Naive thymus-derived CD4-positive, alpha-beta T cell (primary cell): ENCODE measurements at regions of chr10 and their contacts with region 1.

Region 1: DNA sequence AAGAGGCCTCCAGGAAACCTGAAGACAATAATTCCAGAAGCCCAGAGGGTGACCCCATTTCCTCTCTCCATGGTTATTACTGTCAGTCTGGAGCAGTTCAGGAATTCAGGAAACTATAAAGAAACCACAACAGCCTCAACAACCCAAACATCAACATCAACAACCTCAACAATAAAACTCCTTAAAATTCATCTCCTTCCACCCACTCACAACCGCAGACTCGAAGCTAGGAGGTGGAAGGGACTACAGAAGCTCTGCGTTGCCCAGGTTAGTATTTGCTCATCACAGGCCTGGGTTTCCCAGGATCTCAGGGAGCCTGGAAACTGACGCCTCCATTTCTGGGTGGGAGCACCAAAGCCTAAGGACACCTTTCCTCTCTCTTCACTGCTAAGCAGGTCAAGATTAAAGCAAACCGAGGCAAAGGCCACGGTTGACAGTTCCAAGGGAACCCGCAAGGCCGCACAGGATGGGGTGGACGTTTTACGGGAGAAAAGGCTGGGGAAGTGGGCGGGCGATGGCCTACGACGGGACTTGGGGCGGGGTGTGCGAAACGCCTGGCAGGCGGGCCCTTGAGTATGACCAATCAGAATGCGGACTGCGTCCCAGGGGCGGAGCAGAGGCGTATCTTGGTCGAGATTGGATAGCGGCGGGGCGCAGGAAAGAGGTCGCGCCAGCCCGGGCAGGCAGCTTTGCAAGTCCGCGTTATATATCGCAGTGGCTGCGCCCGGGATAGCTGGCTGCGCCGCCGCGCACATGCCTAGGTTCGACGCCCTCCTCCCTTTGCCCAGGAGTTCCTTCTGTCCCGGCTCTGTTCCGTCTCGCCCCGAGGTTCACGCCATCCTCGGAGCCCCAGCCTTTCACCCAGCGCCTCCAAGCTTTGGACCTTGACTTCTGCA is at the start of gene ELOVL3:
- DNase-seq: peak; percentile 56 to 83 (median 79)
- ATAC-seq: peak; percentile 95
- H3K4me3 ChIP-seq: peak within 1 kb of the TSS; percentile 26
- H3K4me3 Mint-ChIP-seq: peak within 1 kb of the TSS; percentile 72 to 95 (median 80)
- H3K27ac ChIP-seq: no peak within 1 kb of the TSS
- H3K27ac Mint-ChIP-seq: peak within 1 kb of the TSS in 5 of 9 donors; percentile 14 to 78 (median 74)
- H3K4me1 ChIP-seq: peaks cover 20 to 22% of the 10 kb centered on the region in 2 donors
- H3K4me1 Mint-ChIP-seq: peaks cover 14 to 23% (median 21%) of the 10 kb centered on the region in 7 donors
- H3K27me3 ChIP-seq: peaks cover 3 to 5% of the 10 kb centered on the region in 2 donors
- H3K27me3 Mint-ChIP-seq: peaks cover 36 to 74% (median 39%) of the 10 kb centered on the region in 5 donors
- total RNA-seq, gene ELOVL3: not detected

Region 2: GRCh38 chr10:101258179-101258885 is 967.6 kb before region 1 on chr10:
- CTCF ChIA-PET with region 1: no interaction called
- POLR2A ChIA-PET with region 1: no interaction called
- intact Hi-C with region 1: no loop called
- DNase-seq: no peak
- ATAC-seq: no peak
- H3K4me3 ChIP-seq: no peak overlapping the region
- H3K4me3 Mint-ChIP-seq: no peak overlapping the region
- H3K27ac ChIP-seq: no peak overlapping the region
- H3K27ac Mint-ChIP-seq: no peak overlapping the region
- H3K4me1 ChIP-seq: no peaks in the 10 kb centered on the region
- H3K4me1 Mint-ChIP-seq: no peaks in the 10 kb centered on the region
- H3K27me3 ChIP-seq: peaks cover 0 to 8% of the 10 kb centered on the region in 2 donors
- H3K27me3 Mint-ChIP-seq: peaks cover 35 to 62% (median 56%) of the 10 kb centered on the region in 5 donors

Region 3: DNA sequence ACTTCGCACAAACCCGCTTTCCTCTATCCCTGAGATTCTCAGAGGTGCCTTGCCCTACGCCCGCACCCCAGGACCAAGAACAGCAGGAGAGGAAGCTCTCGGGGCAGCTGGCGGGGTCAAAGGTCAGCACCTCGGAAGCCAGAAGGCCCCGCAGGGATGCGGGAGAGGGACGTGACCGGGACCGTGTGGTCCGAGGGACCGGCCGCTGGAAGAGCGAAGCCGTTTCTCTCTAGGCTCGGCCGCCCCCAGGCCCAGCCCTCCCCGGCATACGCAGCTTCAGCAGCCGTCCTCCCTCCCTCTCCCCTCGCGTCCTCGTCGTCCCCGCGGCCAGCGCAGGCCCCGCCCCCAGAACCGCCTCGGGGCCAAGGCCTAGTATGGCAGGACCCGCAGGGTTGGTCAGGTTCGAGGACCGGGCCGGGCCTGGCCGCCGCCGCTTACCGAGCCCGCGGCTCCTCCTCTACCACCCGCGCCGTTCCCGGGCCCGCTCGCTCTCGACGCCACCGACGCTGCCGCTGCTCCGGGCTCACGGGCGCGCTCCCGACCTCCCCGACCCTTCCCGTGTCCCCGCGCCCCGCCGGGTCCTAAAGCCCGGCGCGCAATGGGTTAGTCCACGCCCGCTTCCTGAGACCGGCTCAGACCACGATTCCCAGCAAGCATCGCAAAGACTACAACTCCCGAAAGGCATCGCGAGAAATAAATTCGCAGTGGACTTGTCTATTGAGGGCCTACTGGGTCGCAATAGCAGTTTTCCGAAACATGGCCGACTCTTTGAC is 170.1 kb before region 1 on chr10 and contains the start of gene ARMH3:
- CTCF ChIA-PET with region 1: no interaction called
- POLR2A ChIA-PET with region 1: no interaction called
- intact Hi-C with region 1: loop called in 1 of 2 experiments (anchors 5 kb)
- DNase-seq: peak; percentile 72 to 90 (median 87)
- ATAC-seq: peak; percentile 98
- H3K4me3 ChIP-seq: peak within 1 kb of the TSS; percentile 92
- H3K4me3 Mint-ChIP-seq: peak within 1 kb of the TSS; percentile 89 to 98 (median 94)
- H3K27ac ChIP-seq: peak within 1 kb of the TSS; percentile 87
- H3K27ac Mint-ChIP-seq: peak within 1 kb of the TSS; percentile 76 to 97 (median 92)
- H3K4me1 ChIP-seq: peaks cover 18 to 20% of the 10 kb centered on the region in 2 donors
- H3K4me1 Mint-ChIP-seq: peaks cover 25 to 50% (median 42%) of the 10 kb centered on the region in 7 donors
- H3K27me3 ChIP-seq: no peaks in the 10 kb centered on the region
- H3K27me3 Mint-ChIP-seq: no peaks in the 10 kb centered on the region
- total RNA-seq, gene ARMH3: 26.7 to 34.0 (median 28.8) TPM

Region 4: DNA sequence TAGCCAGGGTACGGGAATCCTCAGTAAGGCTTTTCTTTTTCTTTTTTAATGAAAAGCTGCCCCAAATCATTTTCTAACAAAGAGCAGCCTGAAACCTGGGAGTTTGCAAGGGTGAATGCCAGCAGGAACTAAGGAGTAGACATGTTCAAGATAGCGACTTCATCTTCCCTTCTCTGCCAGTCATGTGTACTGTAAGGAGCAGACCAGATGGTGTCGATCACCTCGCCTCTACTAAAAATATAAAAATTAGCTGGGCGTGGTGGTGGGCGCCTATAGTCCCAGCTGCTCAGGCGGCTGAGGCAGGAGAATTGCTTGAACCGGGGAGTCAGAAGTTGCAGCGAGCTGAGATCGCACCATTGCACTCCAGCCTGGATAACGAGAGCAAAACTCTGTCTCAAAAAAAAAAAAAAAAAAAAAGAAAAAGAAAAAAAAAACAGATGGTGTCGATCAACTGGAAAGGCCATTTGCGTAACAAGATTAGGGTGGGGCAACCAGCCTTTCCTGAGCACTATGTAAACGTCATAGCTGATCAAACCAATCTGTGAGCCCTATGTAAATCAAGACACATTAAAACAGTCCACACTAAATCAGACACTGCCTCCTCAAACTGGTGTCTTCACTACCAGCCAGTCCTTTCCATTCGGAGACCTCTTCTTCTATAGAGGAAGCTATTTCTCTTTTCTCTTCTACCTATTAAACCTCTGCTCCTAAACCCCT is 39.9 kb before region 1 on chr10:
- CTCF ChIA-PET with region 1: no interaction called
- POLR2A ChIA-PET with region 1: no interaction called
- intact Hi-C with region 1: loop called in 1 of 2 experiments (anchors 5 kb)
- DNase-seq: no peak
- ATAC-seq: no peak
- H3K4me3 ChIP-seq: no peak overlapping the region
- H3K4me3 Mint-ChIP-seq: no peak overlapping the region
- H3K27ac ChIP-seq: no peak overlapping the region
- H3K27ac Mint-ChIP-seq: peak overlapping the region in 1 of 9 donors; percentile 60
- H3K4me1 ChIP-seq: peaks cover 10 to 20% of the 10 kb centered on the region in 2 donors
- H3K4me1 Mint-ChIP-seq: peaks cover 11 to 18% (median 15%) of the 10 kb centered on the region in 7 donors
- H3K27me3 ChIP-seq: no peaks in the 10 kb centered on the region
- H3K27me3 Mint-ChIP-seq: no peaks in the 10 kb centered on the region

Region 5: GRCh38 chr10:102399217-102400089 is 173.6 kb after region 1 on chr10:
- CTCF ChIA-PET with region 1: interaction called, 6 read pairs
- POLR2A ChIA-PET with region 1: interaction called, 5 read pairs
- intact Hi-C with region 1: loop called (anchors 1 kb)
- DNase-seq: peak; percentile 80 to 93 (median 88)
- ATAC-seq: peak; percentile 74
- H3K4me3 ChIP-seq: peak overlapping the region; percentile 56
- H3K4me3 Mint-ChIP-seq: peak overlapping the region; percentile 62 to 83 (median 76)
- H3K27ac ChIP-seq: peak overlapping the region; percentile 93
- H3K27ac Mint-ChIP-seq: peak overlapping the region; percentile 46 to 100 (median 88)
- H3K4me1 ChIP-seq: peaks cover 20 to 26% of the 10 kb centered on the region in 2 donors
- H3K4me1 Mint-ChIP-seq: peaks cover 15 to 42% (median 35%) of the 10 kb centered on the region in 7 donors
- H3K27me3 ChIP-seq: no peaks in the 10 kb centered on the region
- H3K27me3 Mint-ChIP-seq: no peaks in the 10 kb centered on the region

Region 6: DNA sequence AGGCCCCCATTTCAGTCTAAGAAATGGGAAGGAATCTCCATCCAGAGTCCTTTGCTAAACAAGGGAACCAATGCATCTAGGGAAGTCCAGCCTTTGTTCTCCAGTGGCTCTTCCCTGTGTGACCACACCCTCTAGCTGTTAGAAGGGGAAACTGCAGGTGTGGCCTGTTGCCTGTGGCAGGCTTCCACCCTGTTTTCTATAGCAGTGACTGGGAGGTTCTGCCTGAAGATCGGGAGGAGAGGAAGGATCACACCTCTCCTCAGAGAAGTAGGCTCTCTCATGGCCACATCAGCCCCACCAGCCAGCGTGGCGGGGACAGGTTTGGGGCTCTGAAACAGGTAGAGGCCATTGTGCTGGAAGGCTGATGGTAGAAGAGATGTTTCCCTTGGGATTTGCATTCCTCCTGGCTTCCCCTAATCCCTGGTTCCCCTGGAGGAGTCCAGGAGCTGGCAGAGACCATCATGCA is 370.6 kb after region 1 on chr10:
- CTCF ChIA-PET with region 1: no interaction called
- POLR2A ChIA-PET with region 1: no interaction called
- intact Hi-C with region 1: loop called (anchors 1 kb)
- DNase-seq: peak in 2 of 9 donors; percentile 20 to 29
- ATAC-seq: peak; percentile 63
- H3K4me3 ChIP-seq: no peak overlapping the region
- H3K4me3 Mint-ChIP-seq: no peak overlapping the region
- H3K27ac ChIP-seq: no peak overlapping the region
- H3K27ac Mint-ChIP-seq: peak overlapping the region in 2 of 9 donors; percentile 49 to 54
- H3K4me1 ChIP-seq: no peaks in the 10 kb centered on the region
- H3K4me1 Mint-ChIP-seq: peaks cover 0 to 5% (median 0%) of the 10 kb centered on the region in 7 donors
- H3K27me3 ChIP-seq: no peaks in the 10 kb centered on the region
- H3K27me3 Mint-ChIP-seq: no peaks in the 10 kb centered on the region